Panc1 (cell line): ENCODE measurements at regions of chr1 and their contacts with region 1.

Region 1: DNA sequence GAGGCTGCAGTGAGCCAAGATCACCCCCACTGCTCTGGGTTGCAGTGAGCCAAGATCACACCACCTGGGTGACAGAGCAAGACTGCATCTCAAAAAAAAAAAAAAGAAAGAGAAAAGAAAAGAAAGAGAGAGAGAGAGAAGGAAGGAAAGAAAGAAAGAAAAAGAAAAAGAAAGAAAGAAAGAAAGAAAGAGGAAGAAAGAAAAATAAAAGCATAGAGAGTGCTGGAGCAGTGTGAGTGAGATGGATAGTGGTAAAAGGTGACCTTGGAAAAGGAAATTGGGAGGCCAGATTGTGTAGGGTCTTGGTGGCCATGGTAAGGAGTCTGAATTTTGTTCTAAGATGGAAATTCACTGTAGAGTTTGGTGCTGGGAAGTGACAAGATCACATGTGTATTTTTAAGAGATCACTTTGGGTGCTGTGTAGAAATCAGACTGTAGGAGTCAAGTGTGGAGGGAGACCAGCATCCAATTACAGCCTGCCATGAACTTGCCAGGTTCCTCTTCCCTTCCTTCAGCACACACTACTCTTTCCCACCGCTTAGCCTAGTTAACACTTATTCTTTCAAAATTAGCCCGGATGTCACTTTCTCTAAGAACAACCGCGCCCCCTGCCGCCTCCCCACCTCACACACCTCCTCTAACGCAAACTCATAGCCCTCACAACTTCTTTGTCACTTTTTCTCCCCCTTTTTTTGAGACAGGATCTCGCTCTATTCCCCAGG is 17.9 kb downstream of the MTX1 start:
- DNase-seq: no peak
- ATAC-seq: peak; percentile 29
- H3K4me3 ChIP-seq: peak overlapping the region; percentile 74 to 80
- H3K27ac ChIP-seq: peak overlapping the region; percentile 96
- H3K4me1 ChIP-seq: peaks cover 32% of the 10 kb centered on the region
- H3K27me3 ChIP-seq: no peaks in the 10 kb centered on the region
- CTCF ChIP-seq: peak; percentile 78; the same call in 1 of the 2 replicates

Region 2: DNA sequence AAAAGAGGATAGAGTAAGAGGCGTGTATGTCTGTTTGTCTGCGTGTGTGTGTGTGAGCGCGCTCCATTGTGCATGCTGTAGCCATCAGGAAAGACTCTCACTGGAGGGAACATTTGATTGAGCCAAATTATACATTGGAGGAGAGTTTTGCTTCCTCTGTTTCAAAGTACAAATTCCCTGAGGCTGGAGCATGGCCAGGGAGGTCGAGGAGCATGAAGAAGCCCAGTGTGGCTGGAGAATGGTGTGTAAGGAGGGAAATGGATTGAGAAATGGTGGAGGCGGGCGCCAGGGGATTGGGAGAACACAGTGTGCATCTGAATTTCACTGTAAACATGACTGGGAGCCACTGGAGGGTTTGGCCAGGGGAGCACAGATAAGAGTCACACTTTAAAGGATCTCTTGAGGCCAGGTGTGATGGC is 120.7 kb before region 1 on chr1:
- CTCF ChIA-PET with region 1: no interaction called
- POLR2A ChIA-PET with region 1: no interaction called
- in situ Hi-C with region 1: no loop called
- intact Hi-C with region 1: no loop called
- DNase-seq: no peak
- ATAC-seq: no peak
- H3K4me3 ChIP-seq: no peak overlapping the region
- H3K27ac ChIP-seq: no peak overlapping the region
- H3K4me1 ChIP-seq: no peaks in the 10 kb centered on the region
- H3K27me3 ChIP-seq: no peaks in the 10 kb centered on the region
- CTCF ChIP-seq: no peak

Region 3: GRCh38 chr1:155208541-155209311 is 17.6 kb before region 1 on chr1 and contains the start of gene MTX1:
- CTCF ChIA-PET with region 1: interaction called, 9 read pairs
- POLR2A ChIA-PET with region 1: interaction called, 5 read pairs
- in situ Hi-C with region 1: no loop called
- intact Hi-C with region 1: loop called (anchors 1 kb)
- DNase-seq: peak; percentile 51
- ATAC-seq: peak; percentile 87
- H3K4me3 ChIP-seq: peak within 1 kb of the TSS; percentile 94 to 99
- H3K27ac ChIP-seq: peak within 1 kb of the TSS; percentile 93
- H3K4me1 ChIP-seq: peaks cover 19% of the 10 kb centered on the region
- H3K27me3 ChIP-seq: no peaks in the 10 kb centered on the region
- CTCF ChIP-seq: no peak
- total RNA-seq, gene MTX1: 53.6 TPM